SK-N-SH (cell line): ENCODE measurements at regions of chr5 and their contacts with region 1.

Region 1: GRCh38 chr5:72816311-72817145 is at the start of gene TNPO1:
- DNase-seq: peak; percentile 92
- H3K4me3 ChIP-seq: peak within 1 kb of the TSS; percentile 86 to 95
- H3K27ac ChIP-seq: peak within 1 kb of the TSS; percentile 98 to 99
- H3K4me1 ChIP-seq: peaks cover 7 to 12% of the 10 kb centered on the region in 2 experiments; a peak in 3 of 4 replicates
- H3K27me3 ChIP-seq: no peaks in the 10 kb centered on the region
- CTCF ChIP-seq: no peak
- EP300 ChIP-seq: no peak; a peak in 1 of 4 replicates
- RAD21 ChIP-seq: no peak; the same call in 1 of the 2 replicates
- polyA plus RNA-seq, gene TNPO1: 19.9 and 27.9 TPM in 2 replicates

Region 2: DNA sequence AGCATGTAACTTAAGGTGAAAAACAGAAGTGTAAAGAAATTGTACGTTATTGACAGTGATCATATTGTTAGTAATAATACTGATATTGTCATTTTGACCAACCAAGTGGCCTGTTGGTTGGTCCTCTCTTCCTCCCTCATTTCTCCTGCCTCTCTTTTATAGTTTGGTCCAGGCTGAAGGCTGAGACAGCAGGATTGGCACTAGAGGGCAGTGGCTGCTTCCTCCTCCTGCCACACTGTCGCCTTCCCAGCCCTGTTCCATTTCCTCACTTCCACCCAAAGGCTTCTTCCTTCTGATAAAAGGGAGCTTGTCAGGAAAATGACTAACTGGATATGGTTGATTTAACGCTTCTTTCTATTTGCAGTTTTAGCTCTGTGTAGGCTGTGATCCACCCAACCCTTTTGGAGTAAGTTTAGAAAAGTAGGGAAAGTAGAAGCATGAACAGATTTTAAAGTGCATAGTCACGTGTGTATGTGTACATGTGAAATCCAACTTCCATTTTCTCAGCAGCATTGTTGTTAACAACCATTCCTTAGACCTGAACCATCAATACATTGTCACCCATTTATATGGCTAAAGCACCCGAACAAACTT is 460.7 kb before region 1 on chr5:
- CTCF ChIA-PET with region 1: interaction called, 27 read pairs
- POLR2A ChIA-PET with region 1: no interaction called
- DNase-seq: peak; percentile 45
- H3K4me3 ChIP-seq: no peak overlapping the region
- H3K27ac ChIP-seq: no peak overlapping the region
- H3K4me1 ChIP-seq: peaks cover 0 to 8% of the 10 kb centered on the region in 2 experiments; a peak in 2 of 4 replicates
- H3K27me3 ChIP-seq: no peaks in the 10 kb centered on the region
- CTCF ChIP-seq: peak; percentile 59
- EP300 ChIP-seq: no peak
- RAD21 ChIP-seq: peak; percentile 76

Region 3: DNA sequence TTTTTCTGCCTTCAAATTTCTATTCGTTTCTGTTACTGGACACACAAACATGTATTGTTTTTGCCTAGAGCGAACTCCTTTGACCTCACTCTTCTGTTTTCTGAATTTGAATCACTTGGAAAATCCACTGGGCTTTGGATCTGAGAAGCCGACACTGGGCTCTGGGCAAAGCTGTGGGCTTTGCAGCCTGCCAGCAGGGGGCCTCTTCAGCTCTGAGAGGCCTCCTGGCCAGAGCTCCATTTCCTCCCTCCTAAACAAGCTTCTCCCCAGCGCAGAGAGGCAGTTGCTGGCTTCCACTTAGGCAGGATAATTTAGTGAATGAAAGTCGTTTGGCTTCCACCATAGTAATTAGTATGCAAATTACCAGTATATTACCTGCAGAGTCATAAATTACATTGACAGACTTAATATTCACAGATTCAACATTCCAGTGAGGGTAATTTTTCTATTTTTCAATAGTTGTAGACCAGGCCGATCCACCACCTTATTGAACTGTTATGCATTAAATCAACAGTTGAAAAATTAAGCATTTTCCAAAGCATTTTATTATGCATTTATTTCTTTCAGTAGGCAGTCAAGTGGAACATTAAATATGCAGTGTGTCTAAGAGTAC is 205.3 kb before region 1 on chr5:
- CTCF ChIA-PET with region 1: interaction called, 76 read pairs
- POLR2A ChIA-PET with region 1: interaction called, 7 read pairs
- DNase-seq: peak; percentile 66
- H3K4me3 ChIP-seq: peak overlapping the region in 1 of 2 experiments; percentile 16; a peak in 1 of 4 replicates
- H3K27ac ChIP-seq: peak overlapping the region in 1 of 2 experiments; percentile 66; a peak in 2 of 4 replicates
- H3K4me1 ChIP-seq: peaks cover 0 to 26% of the 10 kb centered on the region in 2 experiments; a peak in 2 of 4 replicates
- H3K27me3 ChIP-seq: no peaks in the 10 kb centered on the region
- CTCF ChIP-seq: peak; percentile 96
- EP300 ChIP-seq: no peak
- RAD21 ChIP-seq: peak; percentile 86

Region 4: DNA sequence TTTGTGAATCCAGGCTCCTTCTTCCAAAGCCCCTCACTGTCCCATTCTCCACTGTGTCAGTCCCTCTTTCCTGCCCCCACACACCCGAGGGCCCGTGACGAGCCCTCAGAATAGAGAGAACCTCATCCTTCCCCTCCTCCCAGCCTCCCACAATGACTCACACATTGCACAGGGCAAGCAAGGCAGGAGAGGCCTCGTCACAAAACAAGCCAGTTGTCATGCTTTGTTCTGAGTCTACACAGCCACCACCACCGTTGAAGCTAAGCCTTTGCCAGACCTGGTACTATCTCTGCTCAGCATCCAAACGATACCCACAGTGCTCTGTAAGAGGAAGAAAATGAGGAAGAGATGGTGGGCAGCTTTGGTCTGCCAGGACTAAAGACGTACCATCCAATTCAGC is 167.1 kb before region 1 on chr5:
- CTCF ChIA-PET with region 1: interaction called, 12 read pairs
- POLR2A ChIA-PET with region 1: interaction called, 5 read pairs
- DNase-seq: no peak
- H3K4me3 ChIP-seq: no peak overlapping the region
- H3K27ac ChIP-seq: no peak overlapping the region; a peak in 1 of 4 replicates
- H3K4me1 ChIP-seq: peaks cover 0 to 48% of the 10 kb centered on the region in 2 experiments; a peak in 2 of 4 replicates
- H3K27me3 ChIP-seq: no peaks in the 10 kb centered on the region
- CTCF ChIP-seq: no peak
- EP300 ChIP-seq: no peak
- RAD21 ChIP-seq: no peak

Region 5: DNA sequence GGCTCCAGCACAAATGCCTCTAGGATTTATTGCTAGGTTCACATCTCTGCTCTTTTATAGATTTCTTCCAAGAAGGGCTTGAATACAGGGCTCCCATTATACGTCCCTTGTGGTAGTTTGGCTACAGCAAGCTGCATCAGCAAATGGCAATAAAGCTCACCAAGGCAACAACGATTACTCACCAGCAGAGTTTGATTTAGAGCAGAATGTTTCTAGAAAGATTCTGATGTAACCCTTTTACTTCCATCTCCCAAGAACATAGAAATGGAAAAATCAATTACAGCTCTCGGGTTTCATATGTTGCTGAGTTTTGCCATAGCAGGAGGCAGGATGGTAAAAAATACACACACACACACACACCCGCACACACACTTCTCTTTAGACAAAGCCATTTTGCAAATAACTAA is 124.3 kb before region 1 on chr5:
- CTCF ChIA-PET with region 1: interaction called, 33 read pairs
- POLR2A ChIA-PET with region 1: interaction called, 40 read pairs
- DNase-seq: no peak
- H3K4me3 ChIP-seq: no peak overlapping the region
- H3K27ac ChIP-seq: peak overlapping the region in 1 of 2 experiments; percentile 99; a peak in 2 of 4 replicates
- H3K4me1 ChIP-seq: peaks cover 0 to 56% of the 10 kb centered on the region in 2 experiments; a peak in 2 of 4 replicates
- H3K27me3 ChIP-seq: no peaks in the 10 kb centered on the region; the same call in 1 of the 2 replicates
- CTCF ChIP-seq: no peak
- EP300 ChIP-seq: no peak
- RAD21 ChIP-seq: no peak

Region 6: DNA sequence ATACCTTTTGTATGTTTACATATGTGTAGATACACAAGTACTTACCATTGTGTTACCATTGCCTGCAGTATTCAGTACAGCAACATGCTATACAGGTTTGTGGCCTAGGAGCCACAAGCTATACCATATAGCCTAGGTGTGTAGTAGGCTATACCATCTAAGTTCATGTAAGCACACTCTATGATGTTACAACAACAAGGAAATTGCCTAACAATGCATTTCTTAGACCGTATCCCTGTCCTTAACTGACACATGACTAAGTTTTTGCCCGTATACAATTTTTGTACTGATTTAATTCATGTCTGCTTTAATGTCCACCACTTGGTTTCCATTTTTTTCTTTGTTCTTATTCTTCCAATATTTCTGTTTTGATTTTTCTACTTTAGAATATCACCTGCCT is 18.4 kb after region 1 on chr5:
- CTCF ChIA-PET with region 1: interaction called, 44 read pairs
- POLR2A ChIA-PET with region 1: interaction called, 3 read pairs
- DNase-seq: no peak
- H3K4me3 ChIP-seq: no peak overlapping the region
- H3K27ac ChIP-seq: peak overlapping the region in 1 of 2 experiments; percentile 54; a peak in 3 of 4 replicates
- H3K4me1 ChIP-seq: peaks cover 12 to 32% of the 10 kb centered on the region in 2 experiments
- H3K27me3 ChIP-seq: no peaks in the 10 kb centered on the region
- CTCF ChIP-seq: no peak
- EP300 ChIP-seq: no peak
- RAD21 ChIP-seq: no peak

Region 7: GRCh38 chr5:72895758-72896157 is 79.2 kb after region 1 on chr5:
- CTCF ChIA-PET with region 1: no interaction called
- POLR2A ChIA-PET with region 1: no interaction called
- DNase-seq: no peak
- H3K4me3 ChIP-seq: no peak overlapping the region
- H3K27ac ChIP-seq: no peak overlapping the region
- H3K4me1 ChIP-seq: no peaks in the 10 kb centered on the region; a peak in 1 of 4 replicates
- H3K27me3 ChIP-seq: no peaks in the 10 kb centered on the region
- CTCF ChIP-seq: no peak
- EP300 ChIP-seq: no peak
- RAD21 ChIP-seq: no peak